ENCODE measurements at regions of chr2 and their contacts with region 1.

Region 1: DNA sequence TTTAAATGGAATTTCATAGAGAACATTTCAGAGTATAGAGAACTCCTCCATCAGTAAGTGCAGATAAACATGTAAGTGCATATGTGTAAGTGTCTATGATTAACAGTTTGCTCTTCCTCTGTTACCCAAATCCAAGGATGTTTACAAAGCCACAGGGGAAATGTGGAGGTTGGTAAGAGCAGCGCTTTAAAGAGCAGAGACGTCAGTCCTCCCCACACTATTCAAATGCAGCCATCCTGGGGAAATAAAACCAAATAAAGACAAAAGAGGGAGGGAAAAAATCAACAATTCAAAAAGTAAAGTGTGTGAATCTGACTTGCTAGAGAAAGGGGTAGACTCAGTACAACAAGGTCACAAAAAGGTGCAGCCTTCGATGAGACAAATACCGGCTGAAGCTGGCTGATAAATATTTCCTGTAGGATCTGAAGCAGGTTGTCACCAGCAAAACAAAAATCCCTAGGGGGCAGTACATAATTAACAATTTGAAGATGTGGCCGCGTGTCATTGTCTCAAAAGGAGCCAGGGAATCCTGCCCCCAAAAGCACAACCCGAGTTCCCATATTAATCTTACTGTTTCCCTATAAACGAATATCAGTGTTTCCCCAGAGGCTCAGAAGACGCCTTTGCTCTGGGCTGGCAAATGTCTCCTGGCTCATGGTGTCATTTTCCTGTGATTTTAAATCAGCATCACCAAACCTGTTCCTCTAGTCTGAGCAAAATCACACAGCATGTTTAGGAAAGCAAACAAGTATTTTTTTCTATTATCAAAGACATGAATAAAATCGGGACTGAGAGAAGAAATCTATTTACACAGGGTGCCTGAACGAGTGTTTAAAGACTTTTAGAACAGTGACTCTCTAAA is 216.6 kb downstream of the CDCA7 start:
- DNase-seq: peak; percentile 24
- ATAC-seq: peak; percentile 73
- H3K4me3 ChIP-seq: no peak overlapping the region
- H3K27ac ChIP-seq: no peak overlapping the region
- H3K4me1 ChIP-seq: peaks cover 16 to 35% of the 10 kb centered on the region in 2 experiments
- H3K27me3 ChIP-seq: no peaks in the 10 kb centered on the region
- CTCF ChIP-seq: peak; percentile 30 to 66 (median 50); a peak in 4 of 6 replicates
- POLR2A ChIP-seq: no peak
- RAD21 ChIP-seq: peak; percentile 82

Region 2: GRCh38 chr2:173448938-173449471 is 122.2 kb before region 1 on chr2:
- CTCF ChIA-PET with region 1: interaction called, 14 read pairs
- POLR2A ChIA-PET with region 1: no interaction called
- RAD21 ChIA-PET with region 1: interaction called in 1 of 2 experiments, 3 read pairs
- intact Hi-C with region 1: no loop called
- DNase-seq: peak; percentile 85
- ATAC-seq: peak; percentile 94
- H3K4me3 ChIP-seq: peak overlapping the region; percentile 39 to 58
- H3K27ac ChIP-seq: peak overlapping the region; percentile 53
- H3K4me1 ChIP-seq: peaks cover 2 to 6% of the 10 kb centered on the region in 2 experiments; a peak in 2 of 4 replicates
- H3K27me3 ChIP-seq: no peaks in the 10 kb centered on the region
- CTCF ChIP-seq: peak; percentile 70 to 93 (median 87)
- POLR2A ChIP-seq: peak; percentile 65
- RAD21 ChIP-seq: peak; percentile 80

Region 3: GRCh38 chr2:173557497-173557896 is 13.8 kb before region 1 on chr2:
- CTCF ChIA-PET with region 1: interaction called, 10 read pairs
- POLR2A ChIA-PET with region 1: no interaction called
- RAD21 ChIA-PET with region 1: no interaction called
- intact Hi-C with region 1: no loop called
- DNase-seq: no peak
- ATAC-seq: no peak
- H3K4me3 ChIP-seq: no peak overlapping the region
- H3K27ac ChIP-seq: no peak overlapping the region
- H3K4me1 ChIP-seq: peaks cover 0 to 3% of the 10 kb centered on the region in 2 experiments; a peak in 1 of 4 replicates
- H3K27me3 ChIP-seq: no peaks in the 10 kb centered on the region
- CTCF ChIP-seq: no peak
- POLR2A ChIP-seq: no peak
- RAD21 ChIP-seq: no peak

Region 4: DNA sequence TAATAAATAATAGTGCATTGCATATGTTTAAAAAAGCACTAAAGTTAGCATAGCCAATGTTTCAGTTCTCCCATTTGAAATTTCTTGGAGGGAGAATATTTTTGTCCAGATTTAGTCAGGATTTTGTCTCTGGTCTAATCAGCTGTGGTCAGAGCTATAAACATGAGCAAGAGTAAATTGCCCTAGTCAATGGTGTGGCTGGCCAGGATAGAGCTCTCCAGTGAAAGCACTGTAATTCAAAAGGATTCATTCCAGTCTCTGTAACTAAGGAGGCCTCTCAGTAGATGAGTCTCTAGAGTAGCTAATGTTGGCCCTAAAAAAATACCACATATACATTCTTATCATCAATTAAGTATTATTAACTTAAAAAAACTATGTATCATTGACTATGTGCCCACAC is 25.0 kb after region 1 on chr2:
- CTCF ChIA-PET with region 1: no interaction called
- POLR2A ChIA-PET with region 1: no interaction called
- RAD21 ChIA-PET with region 1: no interaction called
- intact Hi-C with region 1: no loop called
- DNase-seq: no peak
- ATAC-seq: no peak
- H3K4me3 ChIP-seq: no peak overlapping the region
- H3K27ac ChIP-seq: no peak overlapping the region
- H3K4me1 ChIP-seq: peaks cover under 1 to 3% of the 10 kb centered on the region in 2 experiments; a peak in 3 of 4 replicates
- H3K27me3 ChIP-seq: no peaks in the 10 kb centered on the region
- CTCF ChIP-seq: no peak
- POLR2A ChIP-seq: no peak
- RAD21 ChIP-seq: no peak

Region 5: DNA sequence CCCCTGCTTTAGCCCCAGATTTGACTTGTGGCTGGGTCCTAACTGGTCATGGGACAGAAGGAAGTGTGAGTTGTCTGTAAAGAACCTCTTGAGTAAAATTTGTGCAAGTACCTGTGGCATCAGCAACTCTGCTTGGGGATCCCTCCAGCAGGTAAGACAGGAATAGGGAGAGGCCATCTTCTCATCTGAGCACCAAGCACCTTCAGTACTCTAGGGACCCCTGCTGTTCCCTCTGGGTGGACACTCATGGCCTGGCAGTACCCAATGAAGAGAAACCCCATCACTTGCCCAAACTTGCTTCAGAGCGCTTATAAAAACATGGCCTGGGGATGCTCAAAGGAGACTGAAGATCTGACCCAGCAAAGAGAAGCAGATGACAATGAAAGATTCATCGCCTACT is 96.2 kb after region 1 on chr2:
- CTCF ChIA-PET with region 1: no interaction called
- POLR2A ChIA-PET with region 1: no interaction called
- RAD21 ChIA-PET with region 1: no interaction called
- intact Hi-C with region 1: no loop called
- DNase-seq: peak; percentile 10
- ATAC-seq: peak; percentile 80
- H3K4me3 ChIP-seq: no peak overlapping the region
- H3K27ac ChIP-seq: no peak overlapping the region
- H3K4me1 ChIP-seq: peaks cover 0 to 3% of the 10 kb centered on the region in 2 experiments; a peak in 1 of 4 replicates
- H3K27me3 ChIP-seq: no peaks in the 10 kb centered on the region
- CTCF ChIP-seq: peak; percentile 20 to 55 (median 34); a peak in 3 of 6 replicates
- POLR2A ChIP-seq: no peak
- RAD21 ChIP-seq: peak; percentile 70

Region 6: DNA sequence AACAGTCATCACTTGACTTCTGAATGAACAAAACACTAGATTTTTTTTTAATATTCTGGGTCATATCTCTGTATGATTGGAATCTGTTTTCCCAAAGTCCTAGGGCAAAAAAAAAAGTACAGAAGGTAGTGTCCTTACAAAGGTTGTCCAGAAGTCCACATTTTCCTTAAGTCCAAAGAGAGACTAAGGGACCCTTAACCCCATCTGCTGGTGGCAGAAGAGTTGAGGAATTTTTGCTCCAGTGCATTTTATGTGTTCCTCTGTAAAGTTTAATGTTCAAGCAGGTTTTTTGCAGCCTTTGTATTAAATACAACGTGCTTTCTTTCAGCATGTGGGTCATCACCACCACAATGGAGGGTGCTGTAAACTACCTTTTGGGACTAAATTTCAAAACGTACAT is 178.1 kb after region 1 on chr2:
- CTCF ChIA-PET with region 1: no interaction called
- POLR2A ChIA-PET with region 1: no interaction called
- RAD21 ChIA-PET with region 1: no interaction called
- intact Hi-C with region 1: loop called (anchors 2 kb)
- DNase-seq: peak; percentile 27
- ATAC-seq: peak; percentile 52; the same call in 1 of the 2 replicates
- H3K4me3 ChIP-seq: no peak overlapping the region
- H3K27ac ChIP-seq: no peak overlapping the region
- H3K4me1 ChIP-seq: no peaks in the 10 kb centered on the region
- H3K27me3 ChIP-seq: no peaks in the 10 kb centered on the region
- CTCF ChIP-seq: peak; percentile 28 to 58 (median 42); a peak in 5 of 6 replicates
- POLR2A ChIP-seq: no peak
- RAD21 ChIP-seq: peak; percentile 77

Region 7: GRCh38 chr2:174039551-174040416 is 468.5 kb after region 1 on chr2:
- CTCF ChIA-PET with region 1: no interaction called
- POLR2A ChIA-PET with region 1: no interaction called
- RAD21 ChIA-PET with region 1: no interaction called
- intact Hi-C with region 1: loop called (anchors 5 kb)
- DNase-seq: peak; percentile 94
- ATAC-seq: peak; percentile 88
- H3K4me3 ChIP-seq: peak overlapping the region; percentile 8 to 27; a peak in 3 of 4 replicates
- H3K27ac ChIP-seq: peak overlapping the region; percentile 94
- H3K4me1 ChIP-seq: peaks cover 23 to 42% of the 10 kb centered on the region in 2 experiments
- H3K27me3 ChIP-seq: no peaks in the 10 kb centered on the region
- CTCF ChIP-seq: peak; percentile 81 to 83 (median 82)
- POLR2A ChIP-seq: peak; percentile 38
- RAD21 ChIP-seq: peak; percentile 79

Measured in HCT116 (cell line).